Heart left ventricle (tissue), 16 donors: ENCODE measurements at regions of chr1 and their contacts with region 1.

Region 1: DNA sequence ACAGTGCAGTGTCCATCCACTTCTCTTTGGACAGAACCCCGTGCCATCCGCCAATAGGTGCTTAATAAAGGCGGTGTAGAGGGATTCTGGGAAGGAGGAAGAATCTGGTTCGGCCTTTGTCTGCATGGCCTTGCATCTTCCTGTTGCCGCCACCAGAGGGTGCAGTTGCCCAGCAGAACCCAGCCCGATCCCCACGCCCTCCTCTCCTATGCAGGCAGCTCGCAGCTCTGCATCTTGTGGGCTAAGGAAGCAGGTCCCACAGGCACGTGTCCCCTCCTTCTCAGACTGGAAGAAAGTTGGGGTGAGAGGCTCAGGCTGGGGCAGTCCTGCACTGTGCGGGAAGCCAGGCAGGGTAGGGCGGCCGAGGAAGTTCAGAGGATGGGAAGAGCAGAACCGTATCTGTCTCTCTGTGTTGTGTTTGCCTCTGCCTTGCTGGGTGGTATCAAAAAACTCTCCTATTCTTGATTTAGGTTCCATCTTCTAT is 20.8 kb downstream of the NAV1 start:
- DNase-seq: peak; percentile 81 to 89 (median 85)
- ATAC-seq: peak; percentile 77 to 85 (median 78)
- H3K4me3 ChIP-seq: no peak overlapping the region
- H3K27ac ChIP-seq: peak overlapping the region in 4 of 12 donors; percentile 25 to 51 (median 39)
- H3K4me1 ChIP-seq: peaks cover 14 to 94% (median 73%) of the 10 kb centered on the region in 12 donors
- H3K27me3 ChIP-seq: no peaks in the 10 kb centered on the region
- CTCF ChIP-seq: peak; percentile 90 to 97 (median 94)
- POLR2A ChIP-seq: no peak

Region 2: GRCh38 chr1:201530741-201531531 is 28.8 kb before region 1 on chr1:
- intact Hi-C with region 1: loop called in 1 of 10 experiments (anchors 1 kb)
- DNase-seq: peak; percentile 89 to 91 (median 90)
- ATAC-seq: peak; percentile 75 to 91 (median 88)
- H3K4me3 ChIP-seq: no peak overlapping the region
- H3K27ac ChIP-seq: peak overlapping the region; percentile 25 to 86 (median 64)
- H3K4me1 ChIP-seq: peaks cover 4 to 49% (median 35%) of the 10 kb centered on the region in 12 donors
- H3K27me3 ChIP-seq: no peaks in the 10 kb centered on the region
- CTCF ChIP-seq: peak; percentile 75 to 90 (median 82)
- POLR2A ChIP-seq: no peak

Region 3: DNA sequence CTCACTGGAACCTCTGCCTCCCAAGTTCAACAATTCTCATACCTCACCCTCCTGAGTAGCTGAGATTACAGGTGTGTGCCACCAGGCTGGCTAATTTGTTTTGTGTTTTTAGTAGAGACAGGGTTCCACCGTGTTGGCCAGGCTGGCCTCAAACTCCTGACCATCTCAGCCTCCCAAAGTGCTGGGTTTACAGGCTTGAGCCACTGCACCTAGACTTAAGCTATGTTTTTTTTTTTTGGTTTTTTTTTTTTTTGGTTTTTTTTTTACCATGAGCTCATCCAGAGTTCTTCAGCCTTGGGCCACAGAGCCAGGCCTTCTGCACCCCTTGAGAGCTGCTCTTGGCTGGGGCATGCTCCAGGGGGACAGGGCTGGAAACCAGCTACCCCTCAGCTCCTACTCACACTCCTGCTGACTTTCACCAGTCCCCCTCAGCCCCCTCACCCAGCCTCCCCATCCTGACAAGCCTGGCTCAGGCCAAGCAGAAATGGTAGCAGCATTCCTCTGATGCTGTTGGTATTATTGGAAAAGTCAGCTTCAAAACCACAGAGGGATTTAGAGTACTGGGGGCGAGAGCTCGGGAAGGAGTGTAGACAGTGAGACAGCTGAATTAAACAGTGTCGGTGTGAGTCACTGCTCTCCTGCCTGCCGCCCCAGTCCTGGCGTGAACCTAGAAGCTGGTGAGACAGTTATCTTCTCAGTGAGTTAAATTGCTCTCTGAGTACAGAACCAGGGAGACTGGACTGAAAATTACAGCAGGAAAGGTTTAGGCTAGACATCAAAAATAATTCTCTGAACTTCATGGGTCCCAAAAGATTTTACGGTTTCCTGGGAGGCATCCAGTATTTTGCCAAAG is 42.9 kb after region 1 on chr1:
- intact Hi-C with region 1: loop called in 1 of 10 experiments (anchors 5 kb)
- DNase-seq: peak in 2 of 5 donors; percentile 41 to 65
- ATAC-seq: peak; percentile 29 to 93 (median 60)
- H3K4me3 ChIP-seq: no peak overlapping the region
- H3K27ac ChIP-seq: peak overlapping the region in 3 of 12 donors; percentile 2 to 47 (median 30)
- H3K4me1 ChIP-seq: peaks cover 0 to 75% (median 37%) of the 10 kb centered on the region in 12 donors
- H3K27me3 ChIP-seq: no peaks in the 10 kb centered on the region
- CTCF ChIP-seq: no peak
- POLR2A ChIP-seq: no peak

Region 4: DNA sequence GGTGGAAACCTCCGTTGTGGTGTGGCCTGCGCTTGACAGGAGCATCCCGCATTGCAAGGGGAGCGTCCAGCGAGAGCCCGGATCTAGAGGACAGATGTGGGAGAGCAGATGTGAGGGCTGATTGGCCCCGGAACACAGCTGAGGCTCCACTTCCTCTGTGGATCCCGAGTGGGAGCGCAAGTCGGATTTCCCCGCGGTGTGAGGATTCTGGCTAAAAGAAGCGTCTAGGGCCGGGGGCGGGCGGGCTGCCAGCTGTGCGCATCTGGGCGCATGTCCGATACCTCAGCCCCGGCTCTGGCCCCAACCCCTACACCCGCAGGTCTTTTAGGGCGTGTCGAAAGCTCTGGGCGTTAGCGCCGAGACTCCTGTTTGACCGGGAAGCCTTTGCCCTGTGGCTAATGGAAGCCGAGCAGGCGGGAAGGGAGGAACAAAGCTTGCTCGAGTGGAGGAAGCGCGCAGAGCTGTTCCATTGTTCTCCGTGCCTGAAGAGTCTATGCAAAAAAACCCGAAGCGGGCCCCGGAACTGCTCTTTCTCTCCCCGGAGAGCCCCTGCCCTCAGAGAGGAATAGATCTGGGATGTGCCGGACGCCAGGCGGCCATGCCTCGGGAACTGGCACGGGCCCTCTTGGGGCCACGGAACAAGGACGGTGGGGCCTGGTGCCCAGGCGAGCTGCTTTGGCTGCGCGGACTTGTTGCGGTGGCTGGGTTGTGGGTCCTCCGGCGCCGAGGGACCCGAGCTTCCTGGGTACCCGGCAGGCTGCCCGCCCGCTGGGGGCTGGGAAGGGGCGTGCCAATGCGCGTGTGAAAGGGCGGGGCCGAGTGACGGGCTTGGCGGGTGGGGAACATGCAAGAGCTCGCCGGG is 90.3 kb after region 1 on chr1:
- intact Hi-C with region 1: loop called in 2 of 10 experiments (anchors 2 to 10 kb)
- DNase-seq: peak; percentile 82 to 93 (median 87)
- ATAC-seq: peak; percentile 47 to 74 (median 70)
- H3K4me3 ChIP-seq: peak overlapping the region; percentile 36 to 93 (median 68)
- H3K27ac ChIP-seq: peak overlapping the region; percentile 18 to 94 (median 80)
- H3K4me1 ChIP-seq: peaks cover 4 to 86% (median 63%) of the 10 kb centered on the region in 12 donors
- H3K27me3 ChIP-seq: no peaks in the 10 kb centered on the region
- CTCF ChIP-seq: peak in 1 of 12 donors; percentile 17
- POLR2A ChIP-seq: peak in 1 of 2 donors; percentile 18

Region 5: DNA sequence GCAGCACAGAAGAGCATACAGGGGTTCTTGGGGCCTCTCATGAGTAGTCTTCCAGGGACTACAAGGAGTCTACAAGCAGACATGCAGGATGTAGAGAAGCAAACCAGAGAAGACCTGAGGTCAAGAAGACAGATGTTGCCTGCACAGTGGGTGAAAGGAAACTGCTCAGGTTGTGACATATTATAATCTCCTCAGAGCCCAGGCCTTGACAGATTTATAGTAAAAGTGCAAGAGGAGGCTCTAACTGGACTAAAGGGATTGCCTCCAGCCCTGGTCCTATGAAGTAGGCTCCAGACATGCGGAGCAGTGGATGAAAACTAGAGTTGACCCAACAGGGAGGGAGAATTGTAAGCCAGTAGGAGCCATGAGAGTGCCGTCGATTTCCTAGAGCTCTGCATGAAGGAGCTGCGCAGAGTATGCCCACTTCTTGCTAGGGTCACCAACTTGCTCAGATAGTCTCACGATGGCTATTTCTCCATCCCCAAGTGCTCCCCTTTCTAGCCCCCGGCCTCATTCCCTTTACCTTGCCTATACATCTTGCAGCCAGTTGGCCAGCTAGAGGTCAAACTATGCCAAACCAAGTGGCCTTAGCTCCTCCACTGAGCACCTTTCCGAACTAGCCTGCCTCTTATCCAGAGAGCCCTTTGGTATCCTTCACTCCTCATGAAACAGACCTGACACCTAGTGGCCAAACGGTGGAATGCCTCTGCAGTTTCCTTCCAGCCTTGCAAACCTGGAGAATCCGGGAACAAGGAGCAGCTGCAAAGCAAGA is 233.0 kb after region 1 on chr1:
- intact Hi-C with region 1: loop called (anchors 1 to 5 kb)
- DNase-seq: peak in 4 of 5 donors; percentile 64 to 79 (median 75)
- ATAC-seq: peak; percentile 75 to 81 (median 81)
- H3K4me3 ChIP-seq: no peak overlapping the region
- H3K27ac ChIP-seq: peak overlapping the region in 11 of 12 donors; percentile 59 to 93 (median 79)
- H3K4me1 ChIP-seq: peaks cover 24 to 75% (median 51%) of the 10 kb centered on the region in 12 donors
- H3K27me3 ChIP-seq: no peaks in the 10 kb centered on the region
- CTCF ChIP-seq: peak; percentile 90 to 98 (median 95)
- POLR2A ChIP-seq: no peak

Region 6: GRCh38 chr1:202154766-202155477 is 595.2 kb after region 1 on chr1:
- intact Hi-C with region 1: no loop called
- DNase-seq: no peak
- ATAC-seq: peak in 3 of 4 donors; percentile 50 to 57 (median 52)
- H3K4me3 ChIP-seq: no peak overlapping the region
- H3K27ac ChIP-seq: no peak overlapping the region
- H3K4me1 ChIP-seq: peaks cover 0 to 35% (median 5%) of the 10 kb centered on the region in 12 donors
- H3K27me3 ChIP-seq: no peaks in the 10 kb centered on the region
- CTCF ChIP-seq: peak in 8 of 12 donors; percentile 6 to 49 (median 36)
- POLR2A ChIP-seq: no peak